ENCODE measurements at regions of chr3 and their contacts with region 1.

Region 1: DNA sequence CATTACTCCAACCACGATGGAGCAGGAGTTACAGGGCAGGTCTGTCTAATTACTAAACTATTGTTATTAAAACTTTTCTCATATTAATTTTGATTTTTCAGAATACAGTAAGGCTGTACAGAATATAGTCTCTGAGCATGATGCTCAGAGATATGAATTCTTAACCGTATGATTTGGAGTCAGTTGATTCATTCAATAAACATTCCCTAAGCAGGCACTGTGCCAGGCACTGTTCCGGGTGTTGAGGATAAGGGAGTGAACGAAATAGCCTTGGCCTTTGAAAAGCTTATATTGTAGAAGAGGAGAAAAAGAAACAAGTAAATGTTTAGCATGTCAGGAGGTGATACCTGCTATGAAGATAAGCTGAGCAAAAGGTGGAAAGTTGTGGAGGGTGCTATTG is 187.3 kb downstream of the KCNAB1 start:
- DNase-seq: peak; percentile 89
- H3K4me3 ChIP-seq: no peak overlapping the region
- H3K27ac ChIP-seq: peak overlapping the region; percentile 57
- H3K4me1 ChIP-seq: peaks cover 48% of the 10 kb centered on the region
- H3K27me3 ChIP-seq: no peaks in the 10 kb centered on the region
- CTCF ChIP-seq: no peak
- POLR2A ChIP-seq: no peak

Region 2: GRCh38 chr3:156211583-156211982 is 96.1 kb before region 1 on chr3:
- CTCF ChIA-PET with region 1: interaction called, 5 read pairs
- POLR2A ChIA-PET with region 1: no interaction called
- dilution Hi-C with region 1: no loop called
- intact Hi-C with region 1: loop called (anchors 1 kb)
- DNase-seq: peak; percentile 90
- H3K4me3 ChIP-seq: no peak overlapping the region
- H3K27ac ChIP-seq: peak overlapping the region; percentile 49
- H3K4me1 ChIP-seq: peaks cover 28% of the 10 kb centered on the region
- H3K27me3 ChIP-seq: no peaks in the 10 kb centered on the region
- CTCF ChIP-seq: no peak
- POLR2A ChIP-seq: peak; percentile 24

Region 3: DNA sequence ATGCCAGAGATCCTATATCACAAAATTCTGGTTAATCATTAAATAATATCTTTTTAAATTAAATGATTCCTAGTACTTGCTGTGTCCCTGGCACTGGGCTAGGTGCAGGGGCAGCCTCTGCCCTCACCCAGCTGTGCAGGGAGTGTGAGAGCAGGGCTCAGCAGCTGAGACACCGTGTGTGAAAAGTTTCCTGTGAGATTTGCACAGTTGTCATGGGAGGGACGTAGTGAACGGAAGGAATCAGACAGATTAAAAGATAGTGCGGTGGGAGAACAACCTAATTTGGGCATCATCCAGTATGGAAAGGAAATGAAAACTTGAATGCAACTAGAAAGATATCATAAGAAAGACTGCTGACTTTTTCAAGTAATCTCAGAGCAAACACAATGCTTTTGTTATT is 43.1 kb after region 1 on chr3:
- CTCF ChIA-PET with region 1: no interaction called
- POLR2A ChIA-PET with region 1: no interaction called
- dilution Hi-C with region 1: no loop called
- intact Hi-C with region 1: no loop called
- DNase-seq: peak; percentile 12
- H3K4me3 ChIP-seq: no peak overlapping the region
- H3K27ac ChIP-seq: no peak overlapping the region
- H3K4me1 ChIP-seq: no peaks in the 10 kb centered on the region
- H3K27me3 ChIP-seq: no peaks in the 10 kb centered on the region
- CTCF ChIP-seq: no peak
- POLR2A ChIP-seq: no peak

Region 4: DNA sequence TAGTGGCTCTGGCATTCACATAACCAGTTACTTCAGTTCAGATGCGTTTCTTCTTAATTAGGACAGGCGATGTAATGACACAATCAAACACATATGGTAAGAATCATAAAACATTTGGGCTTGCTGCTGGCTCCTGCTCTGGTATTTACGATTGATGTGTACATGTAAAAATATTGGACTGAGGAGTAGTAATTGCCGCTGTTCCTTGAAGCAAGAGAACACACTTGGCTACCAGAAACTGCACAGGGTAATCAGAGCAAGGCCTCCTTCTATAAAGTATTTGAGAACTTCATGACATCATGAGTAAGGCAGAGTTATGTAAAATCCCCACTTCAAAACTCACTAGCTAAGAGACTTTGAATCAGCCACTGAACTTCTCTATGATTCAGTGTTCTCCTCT is 89.1 kb after region 1 on chr3:
- CTCF ChIA-PET with region 1: no interaction called
- POLR2A ChIA-PET with region 1: no interaction called
- dilution Hi-C with region 1: no loop called
- intact Hi-C with region 1: no loop called
- DNase-seq: no peak
- H3K4me3 ChIP-seq: no peak overlapping the region
- H3K27ac ChIP-seq: no peak overlapping the region
- H3K4me1 ChIP-seq: no peaks in the 10 kb centered on the region
- H3K27me3 ChIP-seq: no peaks in the 10 kb centered on the region
- CTCF ChIP-seq: no peak
- POLR2A ChIP-seq: no peak

Region 5: DNA sequence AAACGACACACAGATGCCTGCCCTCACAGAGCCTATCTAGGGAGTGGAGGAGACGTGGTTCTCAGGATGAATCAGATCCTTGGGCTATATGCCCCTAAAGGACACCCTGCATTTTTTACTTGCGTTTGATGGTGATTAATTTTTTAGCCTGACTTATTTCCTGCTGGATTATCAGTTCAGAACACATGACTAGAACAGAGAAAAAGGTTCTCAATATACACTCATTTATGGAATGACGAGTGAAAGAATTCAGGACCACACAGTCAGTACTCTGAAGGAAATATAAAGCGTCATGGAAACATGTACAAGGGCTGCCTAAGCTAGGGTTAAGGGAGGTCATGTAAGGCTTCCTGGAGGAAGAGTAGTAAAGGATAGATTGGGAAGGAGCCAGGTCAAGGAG is 125.4 kb after region 1 on chr3:
- CTCF ChIA-PET with region 1: no interaction called
- POLR2A ChIA-PET with region 1: no interaction called
- dilution Hi-C with region 1: no loop called
- intact Hi-C with region 1: loop called (anchors 2 kb)
- DNase-seq: peak; percentile 92
- H3K4me3 ChIP-seq: no peak overlapping the region
- H3K27ac ChIP-seq: peak overlapping the region; percentile 48
- H3K4me1 ChIP-seq: peaks cover 25% of the 10 kb centered on the region
- H3K27me3 ChIP-seq: no peaks in the 10 kb centered on the region
- CTCF ChIP-seq: no peak
- POLR2A ChIP-seq: no peak

Region 6: DNA sequence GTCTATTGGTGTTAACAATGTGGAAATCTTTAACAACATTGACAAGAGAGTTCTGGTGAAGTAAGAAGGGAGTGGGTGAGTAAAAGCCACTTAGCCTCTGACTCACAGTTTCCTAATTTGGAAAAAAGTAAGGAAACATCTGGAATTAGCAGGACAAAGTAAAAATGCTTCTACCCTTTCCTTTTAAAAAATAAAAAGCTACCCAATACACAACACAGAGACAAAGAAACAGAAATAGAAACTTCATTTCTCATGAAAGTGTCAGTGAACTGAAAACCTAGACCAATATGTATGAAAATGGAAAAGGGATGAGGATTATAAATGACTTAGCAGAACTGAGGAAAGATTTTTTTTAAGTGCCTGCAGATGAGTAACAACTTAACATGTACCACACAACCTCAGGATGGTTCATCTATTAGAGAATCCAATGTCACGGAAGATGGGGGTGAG is 181.8 kb after region 1 on chr3:
- CTCF ChIA-PET with region 1: no interaction called
- POLR2A ChIA-PET with region 1: no interaction called
- dilution Hi-C with region 1: no loop called
- intact Hi-C with region 1: loop called (anchors 2 kb)
- DNase-seq: peak; percentile 85
- H3K4me3 ChIP-seq: no peak overlapping the region
- H3K27ac ChIP-seq: peak overlapping the region; percentile 74
- H3K4me1 ChIP-seq: peaks cover 31% of the 10 kb centered on the region
- H3K27me3 ChIP-seq: no peaks in the 10 kb centered on the region
- CTCF ChIP-seq: no peak
- POLR2A ChIP-seq: no peak

Region 7: DNA sequence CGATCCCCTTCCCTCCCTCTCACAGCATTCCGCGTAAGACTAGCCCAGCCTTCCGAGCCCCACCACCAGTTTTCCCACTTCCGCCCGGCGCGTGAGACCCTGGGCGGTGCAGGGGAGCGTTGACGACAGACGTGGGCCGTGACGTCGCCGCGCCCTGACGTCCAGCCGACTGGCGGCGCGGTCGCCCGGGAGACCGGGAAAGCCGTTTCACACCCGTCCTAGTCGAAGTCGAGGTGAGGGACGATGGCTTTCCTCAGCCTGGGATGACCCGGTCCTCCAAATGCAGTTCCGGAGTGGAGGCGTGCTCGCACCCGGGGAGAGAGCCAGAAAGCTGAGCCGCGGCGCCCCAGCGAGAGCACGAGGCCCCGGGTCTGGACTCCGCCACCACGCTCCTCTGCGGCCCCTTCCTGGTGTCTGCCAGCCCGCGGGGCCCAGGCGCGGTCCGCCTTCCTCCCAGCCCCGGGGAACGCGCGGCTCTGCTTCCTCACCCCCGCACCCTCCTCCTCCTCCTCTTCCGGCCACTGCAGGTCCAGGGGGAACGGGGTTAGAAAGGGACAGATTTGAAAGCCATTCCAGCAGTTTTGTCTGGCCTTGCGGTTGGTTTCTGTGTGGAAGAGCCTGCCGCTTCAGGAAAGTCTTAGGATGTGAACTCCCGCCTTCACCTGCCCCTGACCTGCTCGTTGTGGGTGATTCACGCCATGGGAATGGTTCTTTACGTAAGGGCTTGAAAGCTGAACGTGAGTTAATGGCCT is 518.6 kb after region 1 on chr3 and contains the start of gene LEKR1:
- CTCF ChIA-PET with region 1: no interaction called
- POLR2A ChIA-PET with region 1: no interaction called
- dilution Hi-C with region 1: no loop called
- intact Hi-C with region 1: loop called (anchors 10 kb)
- DNase-seq: peak; percentile 89
- H3K4me3 ChIP-seq: peak within 1 kb of the TSS; percentile 45 to 90 (median 55)
- H3K27ac ChIP-seq: peak within 1 kb of the TSS; percentile 100
- H3K4me1 ChIP-seq: peaks cover 20% of the 10 kb centered on the region
- H3K27me3 ChIP-seq: no peaks in the 10 kb centered on the region
- CTCF ChIP-seq: no peak
- POLR2A ChIP-seq: peak; percentile 53
- total RNA-seq, gene LEKR1: 0.21 and 0.64 TPM in 2 replicates